CD8-positive, alpha-beta T cell (primary cell): ENCODE measurements at regions of chr1 and their contacts with region 1.

Region 1: GRCh38 chr1:45303582-45304310 is 22.9 kb upstream of the HPDL start:
- DNase-seq: peak; percentile 95 to 98 (median 98)
- ATAC-seq: peak; percentile 88
- H3K4me3 ChIP-seq: peak overlapping the region; percentile 85 to 93
- H3K4me3 Mint-ChIP-seq: peak overlapping the region; percentile 91
- H3K27ac ChIP-seq: peak overlapping the region; percentile 89 to 95
- H3K27ac Mint-ChIP-seq: peak overlapping the region; percentile 98
- H3K4me1 ChIP-seq: peaks cover 9% of the 10 kb centered on the region
- H3K4me1 Mint-ChIP-seq: peaks cover 23% of the 10 kb centered on the region
- H3K27me3 ChIP-seq: no peaks in the 10 kb centered on the region
- H3K27me3 Mint-ChIP-seq: no peaks in the 10 kb centered on the region
- CTCF ChIP-seq: peak; percentile 66

Region 2: GRCh38 chr1:44213222-44214112 is 1090.3 kb before region 1 on chr1 and contains the start of gene DMAP1:
- CTCF ChIA-PET with region 1: no interaction called
- POLR2A ChIA-PET with region 1: no interaction called
- intact Hi-C with region 1: loop called in 1 of 2 experiments (anchors 10 kb)
- DNase-seq: peak; percentile 75 to 95 (median 86)
- ATAC-seq: peak; percentile 83
- H3K4me3 ChIP-seq: peak within 1 kb of the TSS; percentile 91
- H3K4me3 Mint-ChIP-seq: peak within 1 kb of the TSS; percentile 95
- H3K27ac ChIP-seq: peak within 1 kb of the TSS; percentile 61 to 74
- H3K27ac Mint-ChIP-seq: peak within 1 kb of the TSS; percentile 83
- H3K4me1 ChIP-seq: peaks cover 18% of the 10 kb centered on the region
- H3K4me1 Mint-ChIP-seq: peaks cover 42% of the 10 kb centered on the region
- H3K27me3 ChIP-seq: no peaks in the 10 kb centered on the region
- H3K27me3 Mint-ChIP-seq: no peaks in the 10 kb centered on the region
- CTCF ChIP-seq: no peak
- total RNA-seq, gene DMAP1: 59.0 to 59.5 TPM

Region 3: GRCh38 chr1:44730741-44731512 is 572.8 kb before region 1 on chr1 and contains the start of gene RNU5D-1:
- CTCF ChIA-PET with region 1: interaction called, 9 read pairs
- POLR2A ChIA-PET with region 1: no interaction called
- intact Hi-C with region 1: loop called in 1 of 2 experiments (anchors 1 kb)
- DNase-seq: peak; percentile 86 to 96 (median 94)
- ATAC-seq: peak; percentile 75
- H3K4me3 ChIP-seq: peak within 1 kb of the TSS; percentile 36 to 47
- H3K4me3 Mint-ChIP-seq: peak within 1 kb of the TSS; percentile 84
- H3K27ac ChIP-seq: peak within 1 kb of the TSS; percentile 98 to 99
- H3K27ac Mint-ChIP-seq: peak within 1 kb of the TSS; percentile 100
- H3K4me1 ChIP-seq: peaks cover 14% of the 10 kb centered on the region
- H3K4me1 Mint-ChIP-seq: peaks cover 36% of the 10 kb centered on the region
- H3K27me3 ChIP-seq: no peaks in the 10 kb centered on the region
- H3K27me3 Mint-ChIP-seq: no peaks in the 10 kb centered on the region
- CTCF ChIP-seq: peak; percentile 93
- total RNA-seq, gene RNU5D-1: not detected

Region 4: DNA sequence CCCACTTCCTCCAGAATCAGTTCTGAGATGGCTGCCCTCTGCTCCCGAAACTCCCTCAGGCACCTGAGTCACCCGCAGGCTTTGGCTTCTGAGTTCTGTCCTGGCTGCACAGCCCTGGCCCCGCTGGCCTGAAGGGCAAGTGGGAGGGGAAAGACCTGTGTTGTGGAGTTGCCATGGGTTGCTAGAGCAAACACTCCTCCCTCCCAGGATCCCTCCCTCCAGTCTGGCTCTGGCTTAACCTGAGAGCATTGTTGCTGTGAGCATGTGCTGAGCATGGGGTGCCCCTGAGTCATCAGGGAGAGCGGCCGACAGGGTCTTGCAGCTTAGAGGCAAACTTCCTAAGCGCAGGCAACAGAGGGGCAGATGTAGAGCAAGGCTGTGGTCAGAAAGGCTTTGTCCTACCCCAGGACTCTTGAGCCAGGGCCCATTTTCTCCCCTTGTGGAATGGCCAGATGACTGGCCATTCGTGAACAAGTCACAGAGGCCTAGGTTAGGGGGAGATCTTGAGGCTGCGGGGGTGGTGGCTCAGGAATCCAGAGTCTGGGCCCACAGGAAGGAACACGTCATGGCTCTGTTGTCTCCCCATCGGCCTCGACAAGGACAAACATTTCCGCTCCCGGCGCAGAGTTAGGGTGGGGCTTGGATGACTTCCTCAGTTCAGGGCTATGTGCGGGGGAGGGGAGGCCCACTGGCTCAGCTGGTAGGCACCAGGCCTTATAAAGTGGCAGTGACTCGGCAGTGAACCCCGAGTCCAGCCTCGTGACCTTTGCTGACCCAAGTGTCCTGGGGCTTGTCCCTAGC is 496.3 kb before region 1 on chr1 and contains the start of gene DYNLT4:
- CTCF ChIA-PET with region 1: interaction called, 3 read pairs
- POLR2A ChIA-PET with region 1: interaction called, 10 read pairs
- intact Hi-C with region 1: loop called in 1 of 2 experiments (anchors 5 kb)
- DNase-seq: peak; percentile 83 to 98 (median 93)
- ATAC-seq: peak; percentile 58
- H3K4me3 ChIP-seq: peak within 1 kb of the TSS in 1 of 2 experiments; percentile 35
- H3K4me3 Mint-ChIP-seq: peak within 1 kb of the TSS; percentile 60
- H3K27ac ChIP-seq: peak within 1 kb of the TSS; percentile 93 to 96
- H3K27ac Mint-ChIP-seq: peak within 1 kb of the TSS; percentile 99
- H3K4me1 ChIP-seq: peaks cover 70% of the 10 kb centered on the region
- H3K4me1 Mint-ChIP-seq: peaks cover 78% of the 10 kb centered on the region
- H3K27me3 ChIP-seq: no peaks in the 10 kb centered on the region
- H3K27me3 Mint-ChIP-seq: no peaks in the 10 kb centered on the region
- CTCF ChIP-seq: no peak
- total RNA-seq, gene DYNLT4: 2.2 to 2.5 TPM

Region 5: GRCh38 chr1:45011837-45012638 is 291.7 kb before region 1 on chr1 and contains the start of gene UROD:
- CTCF ChIA-PET with region 1: interaction called, 315 read pairs
- POLR2A ChIA-PET with region 1: interaction called, 94 read pairs
- intact Hi-C with region 1: loop called (anchors 1 kb)
- DNase-seq: peak; percentile 77 to 96 (median 86)
- ATAC-seq: peak; percentile 83
- H3K4me3 ChIP-seq: peak within 1 kb of the TSS; percentile 56 to 82
- H3K4me3 Mint-ChIP-seq: peak within 1 kb of the TSS; percentile 89
- H3K27ac ChIP-seq: peak within 1 kb of the TSS; percentile 61 to 77
- H3K27ac Mint-ChIP-seq: peak within 1 kb of the TSS; percentile 95
- H3K4me1 ChIP-seq: peaks cover 30% of the 10 kb centered on the region
- H3K4me1 Mint-ChIP-seq: peaks cover 52% of the 10 kb centered on the region
- H3K27me3 ChIP-seq: no peaks in the 10 kb centered on the region
- H3K27me3 Mint-ChIP-seq: no peaks in the 10 kb centered on the region
- CTCF ChIP-seq: no peak
- total RNA-seq, gene UROD: 38.3 to 41.2 TPM

Region 6: GRCh38 chr1:45326627-45327623 is 23.2 kb after region 1 on chr1 and contains the start of gene HPDL:
- CTCF ChIA-PET with region 1: interaction called, 3 read pairs
- POLR2A ChIA-PET with region 1: interaction called, 9 read pairs
- intact Hi-C with region 1: loop called (anchors 1 kb)
- DNase-seq: peak in 8 of 9 experiments; percentile 33 to 76 (median 62)
- ATAC-seq: peak; percentile 82
- H3K4me3 ChIP-seq: peak within 1 kb of the TSS; percentile 70 to 84
- H3K4me3 Mint-ChIP-seq: peak within 1 kb of the TSS; percentile 82
- H3K27ac ChIP-seq: peak within 1 kb of the TSS in 1 of 2 experiments; percentile 8
- H3K27ac Mint-ChIP-seq: peak within 1 kb of the TSS; percentile 32
- H3K4me1 ChIP-seq: peaks cover 15% of the 10 kb centered on the region
- H3K4me1 Mint-ChIP-seq: peaks cover 17% of the 10 kb centered on the region
- H3K27me3 ChIP-seq: no peaks in the 10 kb centered on the region
- H3K27me3 Mint-ChIP-seq: no peaks in the 10 kb centered on the region
- CTCF ChIP-seq: no peak
- total RNA-seq, gene HPDL: 0.43 to 0.47 TPM

Region 7: DNA sequence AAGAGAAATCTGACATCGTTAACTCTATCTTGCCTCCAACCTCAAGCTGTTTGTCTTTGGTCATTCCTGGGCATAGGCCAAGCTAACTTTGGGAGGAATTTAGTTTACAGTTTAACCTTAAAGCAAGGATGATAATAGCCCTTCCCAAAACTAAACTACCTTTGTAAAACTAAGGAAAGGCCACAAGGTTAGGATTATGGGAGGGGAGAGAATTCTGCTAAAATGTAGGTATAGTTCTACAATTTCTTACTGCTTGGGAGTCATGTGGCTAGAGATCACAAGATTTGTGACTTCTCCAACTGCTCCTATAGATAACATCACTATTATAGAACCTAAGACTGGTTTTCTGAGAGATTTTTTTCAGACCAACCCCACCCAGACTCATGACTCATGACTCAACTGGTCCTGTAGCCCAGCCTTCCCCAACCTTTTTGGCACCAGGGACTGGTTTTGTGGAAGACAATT is 107.1 kb after region 1 on chr1:
- CTCF ChIA-PET with region 1: no interaction called
- POLR2A ChIA-PET with region 1: no interaction called
- intact Hi-C with region 1: no loop called
- DNase-seq: no peak
- ATAC-seq: no peak
- H3K4me3 ChIP-seq: no peak overlapping the region
- H3K4me3 Mint-ChIP-seq: no peak overlapping the region
- H3K27ac ChIP-seq: no peak overlapping the region
- H3K27ac Mint-ChIP-seq: no peak overlapping the region
- H3K4me1 ChIP-seq: no peaks in the 10 kb centered on the region
- H3K4me1 Mint-ChIP-seq: no peaks in the 10 kb centered on the region
- H3K27me3 ChIP-seq: no peaks in the 10 kb centered on the region
- H3K27me3 Mint-ChIP-seq: no peaks in the 10 kb centered on the region
- CTCF ChIP-seq: no peak

Region 8: DNA sequence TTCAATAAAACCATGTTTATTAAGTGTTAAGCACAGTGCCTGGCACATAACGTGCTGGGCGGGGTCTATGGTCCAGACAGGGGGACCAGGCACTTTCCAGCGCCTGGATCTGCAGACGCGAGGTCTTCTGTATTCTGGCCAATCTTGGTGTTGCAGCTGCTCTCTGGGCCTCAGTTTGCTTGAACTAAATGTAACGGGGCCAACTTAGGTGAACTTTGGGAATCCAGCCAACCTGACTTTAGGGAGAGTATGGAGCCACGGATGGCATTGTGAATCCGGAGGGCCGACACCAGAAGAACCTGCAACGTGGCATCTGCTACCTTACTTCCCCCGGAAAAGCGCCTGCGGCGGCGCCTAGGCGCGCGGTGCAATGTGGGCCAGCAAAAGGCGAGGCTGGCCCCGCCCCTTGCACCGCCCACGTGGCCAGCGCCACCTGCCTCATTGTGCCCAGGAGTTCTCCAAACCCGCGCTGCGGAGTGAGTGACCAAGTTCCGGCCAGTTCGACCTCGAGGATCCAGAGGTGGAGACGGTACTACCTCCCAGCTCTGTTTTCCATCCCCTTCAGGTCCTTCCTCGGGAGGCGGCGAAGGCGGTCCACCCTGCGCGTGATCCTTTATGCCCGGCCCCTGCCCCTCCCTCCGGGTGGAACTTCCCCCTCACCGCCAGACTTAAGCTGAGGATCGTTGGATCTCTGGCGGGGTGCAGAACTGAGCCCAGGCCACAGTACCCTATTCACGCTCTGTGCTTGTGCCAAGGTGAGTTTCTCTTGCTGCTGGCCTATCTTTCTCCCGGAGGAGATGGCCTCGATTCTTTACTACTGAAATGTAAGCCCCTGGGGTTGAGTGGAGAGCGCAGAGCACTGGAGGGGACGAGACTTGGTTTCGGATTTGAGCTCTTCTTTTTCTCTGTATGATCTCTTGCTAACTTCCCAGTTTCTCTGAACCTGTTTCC is 246.9 kb after region 1 on chr1 and contains the start of gene AKR1A1:
- CTCF ChIA-PET with region 1: no interaction called
- POLR2A ChIA-PET with region 1: no interaction called
- intact Hi-C with region 1: loop called in 1 of 2 experiments (anchors 1 kb)
- DNase-seq: peak; percentile 71 to 93 (median 83)
- ATAC-seq: peak; percentile 94
- H3K4me3 ChIP-seq: peak within 1 kb of the TSS; percentile 85 to 96
- H3K4me3 Mint-ChIP-seq: peak within 1 kb of the TSS; percentile 95
- H3K27ac ChIP-seq: peak within 1 kb of the TSS; percentile 76 to 91
- H3K27ac Mint-ChIP-seq: peak within 1 kb of the TSS; percentile 93
- H3K4me1 ChIP-seq: peaks cover 16% of the 10 kb centered on the region
- H3K4me1 Mint-ChIP-seq: peaks cover 23% of the 10 kb centered on the region
- H3K27me3 ChIP-seq: no peaks in the 10 kb centered on the region
- H3K27me3 Mint-ChIP-seq: no peaks in the 10 kb centered on the region
- CTCF ChIP-seq: no peak
- total RNA-seq, gene AKR1A1: 27.2 to 31.9 TPM